Heart right ventricle (tissue), 16 donors: ENCODE measurements at regions of chr20 and their contacts with region 1.

Region 1: GRCh38 chr20:17137692-17138091 is 89.1 kb upstream of the PCSK2 start:
- DNase-seq: no peak
- ATAC-seq: no peak
- H3K4me3 ChIP-seq: no peak overlapping the region
- H3K27ac ChIP-seq: no peak overlapping the region
- H3K4me1 ChIP-seq: no peaks in the 10 kb centered on the region
- H3K27me3 ChIP-seq: peaks cover 0 to 3% (median 0%) of the 10 kb centered on the region in 7 donors
- CTCF ChIP-seq: no peak

Region 2: DNA sequence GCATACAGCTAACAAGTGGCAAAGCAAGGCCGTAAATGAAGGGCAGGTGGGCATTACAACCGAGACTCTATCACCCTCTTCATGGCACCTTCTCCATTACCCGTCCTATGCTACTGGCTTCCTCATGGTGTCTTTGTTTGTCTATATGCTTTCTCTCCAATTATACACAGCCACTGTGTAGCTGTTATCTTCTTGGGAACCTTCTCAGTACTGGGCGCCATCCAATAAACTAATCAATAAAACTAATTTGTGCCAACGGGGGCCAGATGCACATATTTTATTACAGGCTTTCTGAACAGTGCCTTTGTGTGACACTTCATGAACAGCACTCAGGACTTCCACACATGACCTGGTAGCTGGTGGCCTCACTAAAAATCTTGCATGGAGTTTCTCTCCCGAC is 60.7 kb before region 1 on chr20:
- intact Hi-C with region 1: loop called in 1 of 10 experiments (anchors 10 kb)
- DNase-seq: no peak
- ATAC-seq: no peak
- H3K4me3 ChIP-seq: no peak overlapping the region
- H3K27ac ChIP-seq: no peak overlapping the region
- H3K4me1 ChIP-seq: no peaks in the 10 kb centered on the region
- H3K27me3 ChIP-seq: no peaks in the 10 kb centered on the region
- CTCF ChIP-seq: no peak

Region 3: DNA sequence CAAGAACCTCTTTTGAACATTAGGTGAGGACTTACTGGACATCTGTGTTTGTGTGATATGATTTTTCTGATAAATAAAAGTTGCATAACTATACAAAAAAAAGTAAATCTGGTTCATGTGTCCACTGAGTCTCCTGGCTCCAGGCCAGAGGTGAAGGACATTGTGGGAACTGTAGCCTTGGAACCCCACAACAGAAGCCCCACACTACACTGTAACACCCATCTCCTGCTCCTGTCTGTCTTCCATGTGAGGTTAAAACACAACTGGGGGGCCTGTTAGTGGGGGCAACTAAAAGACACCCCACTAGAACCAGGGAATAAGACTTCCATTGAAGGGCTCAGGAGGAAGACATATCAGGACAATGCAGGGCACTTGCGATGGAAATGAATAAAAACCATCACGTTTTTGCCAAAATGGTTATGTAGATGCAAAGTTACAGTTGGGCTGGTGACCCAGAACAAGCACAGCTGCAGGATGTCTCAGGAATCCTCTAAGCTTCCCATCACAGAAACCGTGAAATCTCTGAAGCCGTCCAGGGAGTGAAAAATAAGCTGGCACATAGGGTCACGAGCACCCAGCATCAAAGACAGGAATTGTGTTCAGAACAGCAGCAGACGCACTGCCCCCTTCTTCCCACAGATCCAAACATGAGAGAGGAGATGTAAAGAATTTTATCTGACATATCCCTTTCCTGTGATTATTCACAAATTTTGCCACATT is 52.4 kb after region 1 on chr20:
- intact Hi-C with region 1: loop called in 1 of 10 experiments (anchors 10 kb)
- DNase-seq: no peak
- ATAC-seq: no peak
- H3K4me3 ChIP-seq: no peak overlapping the region
- H3K27ac ChIP-seq: no peak overlapping the region
- H3K4me1 ChIP-seq: no peaks in the 10 kb centered on the region
- H3K27me3 ChIP-seq: no peaks in the 10 kb centered on the region
- CTCF ChIP-seq: no peak